ENCODE measurements at regions of chr6 and their contacts with region 1.

Region 1: GRCh38 chr6:109690737-109691621 is at the starts of genes AK9 and FIG4:
- DNase-seq: peak; percentile 86 to 92 (median 88)
- H3K4me3 ChIP-seq: peak within 1 kb of the TSS; percentile 60
- H3K27ac ChIP-seq: peak within 1 kb of the TSS; percentile 19 to 78
- H3K4me1 ChIP-seq: no peaks in the 10 kb centered on the region
- H3K27me3 ChIP-seq: no peaks in the 10 kb centered on the region
- CTCF ChIP-seq: no peak
- EP300 ChIP-seq: no peak
- POLR2A ChIP-seq: peak; percentile 19
- total RNA-seq, gene AK9: 5.5 to 17.5 (median 9.5) TPM
- total RNA-seq, gene FIG4: 7.6 to 15.8 (median 13.3) TPM

Region 2: DNA sequence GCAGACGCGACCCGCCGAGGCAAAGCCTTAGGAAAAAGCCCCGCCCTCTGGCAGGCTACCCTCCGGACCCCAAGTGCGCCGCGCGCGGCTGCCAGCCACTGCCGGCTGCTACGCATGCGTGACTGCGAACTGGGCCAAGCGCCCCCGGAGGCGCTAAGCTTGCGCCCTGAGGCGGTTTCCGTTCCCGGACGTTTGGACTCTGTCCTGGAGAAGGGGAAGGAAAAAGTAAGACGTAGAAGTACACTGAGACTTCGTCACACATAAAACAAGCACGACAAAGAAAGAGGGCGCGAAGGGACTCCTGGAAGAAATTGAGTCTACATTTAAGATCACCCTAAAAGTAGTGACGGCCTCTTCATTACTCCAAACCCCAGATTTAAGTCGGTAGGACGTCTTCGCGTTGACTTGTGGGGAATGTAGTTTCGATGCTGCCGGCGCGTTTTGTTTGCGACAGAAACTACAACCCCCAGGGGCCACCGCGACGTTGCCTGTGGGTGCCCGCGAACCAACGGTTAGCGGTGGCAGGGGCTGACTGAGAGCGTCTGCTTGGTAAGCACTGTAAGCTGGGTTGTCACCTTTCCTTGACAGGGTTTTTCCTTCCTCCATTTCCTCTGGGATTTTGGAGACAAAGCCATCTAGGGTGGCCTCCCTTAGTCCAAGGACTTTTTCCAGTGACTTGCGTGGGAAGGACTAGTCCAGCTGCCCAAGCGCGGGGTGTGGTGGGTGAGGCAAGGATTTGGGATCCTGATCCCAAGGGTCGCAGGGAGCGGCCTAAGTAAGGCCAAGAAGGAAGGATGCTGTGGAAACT is 595.7 kb before region 1 on chr6 and contains the start of gene CEP57L1:
- intact Hi-C with region 1: loop called in 1 of 4 experiments (anchors 5 kb)
- DNase-seq: peak; percentile 96 to 98 (median 97)
- H3K4me3 ChIP-seq: peak within 1 kb of the TSS; percentile 80
- H3K27ac ChIP-seq: peak within 1 kb of the TSS; percentile 93 to 99
- H3K4me1 ChIP-seq: peaks cover 3% of the 10 kb centered on the region
- H3K27me3 ChIP-seq: no peaks in the 10 kb centered on the region
- CTCF ChIP-seq: peak in 1 of 3 donors; percentile 27
- EP300 ChIP-seq: no peak
- POLR2A ChIP-seq: peak; percentile 60
- total RNA-seq, gene CEP57L1: 7.4 to 12.6 (median 9.7) TPM

Region 3: DNA sequence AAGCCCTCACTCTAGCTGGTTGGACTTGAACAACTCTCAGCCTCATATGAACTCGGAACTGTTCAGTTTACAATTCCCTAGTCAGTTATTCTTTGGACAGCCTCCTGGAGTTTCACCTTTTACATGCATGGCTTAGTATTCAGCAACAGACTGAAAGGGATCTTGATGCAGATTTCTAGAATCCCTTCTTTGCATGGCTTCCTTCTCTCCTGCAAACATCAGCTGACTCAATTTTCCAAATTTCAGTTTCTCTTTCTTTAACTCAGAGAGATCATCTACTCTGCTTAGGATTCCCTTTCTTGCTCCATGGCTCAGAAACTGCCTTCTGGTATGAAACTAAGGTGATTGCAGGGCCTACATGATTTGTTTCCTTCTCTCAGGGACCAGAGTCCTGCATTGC is 496.1 kb before region 1 on chr6:
- intact Hi-C with region 1: loop called in 1 of 4 experiments (anchors 10 kb)
- DNase-seq: no peak
- H3K4me3 ChIP-seq: no peak overlapping the region
- H3K27ac ChIP-seq: no peak overlapping the region
- H3K4me1 ChIP-seq: no peaks in the 10 kb centered on the region
- H3K27me3 ChIP-seq: no peaks in the 10 kb centered on the region
- CTCF ChIP-seq: no peak
- EP300 ChIP-seq: no peak
- POLR2A ChIP-seq: no peak

Region 4: DNA sequence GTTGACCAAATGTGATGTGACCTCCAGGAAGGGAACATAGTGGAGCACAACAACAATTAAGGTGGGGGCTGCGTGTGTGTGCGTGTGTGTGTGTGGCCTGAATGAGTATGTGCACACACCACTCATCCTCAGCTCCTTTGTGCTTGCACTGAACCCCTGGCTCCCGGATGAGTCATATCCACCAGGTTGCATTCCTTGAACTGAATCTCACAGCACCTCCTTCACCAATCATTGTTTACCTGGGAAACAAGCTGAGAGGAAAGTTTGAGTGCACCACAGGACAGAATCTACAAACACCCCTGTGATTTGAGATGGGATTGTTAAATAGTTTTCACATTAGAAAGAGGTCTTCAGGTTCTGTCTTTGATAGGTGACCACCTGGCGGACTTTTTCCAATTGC is 253.5 kb after region 1 on chr6:
- intact Hi-C with region 1: no loop called
- DNase-seq: no peak
- H3K4me3 ChIP-seq: no peak overlapping the region
- H3K27ac ChIP-seq: no peak overlapping the region
- H3K4me1 ChIP-seq: no peaks in the 10 kb centered on the region
- H3K27me3 ChIP-seq: no peaks in the 10 kb centered on the region
- CTCF ChIP-seq: no peak
- EP300 ChIP-seq: no peak
- POLR2A ChIP-seq: no peak